Aorta (tissue), 5 donors: ENCODE measurements at regions of chr11 and their contacts with region 1.

Region 1: DNA sequence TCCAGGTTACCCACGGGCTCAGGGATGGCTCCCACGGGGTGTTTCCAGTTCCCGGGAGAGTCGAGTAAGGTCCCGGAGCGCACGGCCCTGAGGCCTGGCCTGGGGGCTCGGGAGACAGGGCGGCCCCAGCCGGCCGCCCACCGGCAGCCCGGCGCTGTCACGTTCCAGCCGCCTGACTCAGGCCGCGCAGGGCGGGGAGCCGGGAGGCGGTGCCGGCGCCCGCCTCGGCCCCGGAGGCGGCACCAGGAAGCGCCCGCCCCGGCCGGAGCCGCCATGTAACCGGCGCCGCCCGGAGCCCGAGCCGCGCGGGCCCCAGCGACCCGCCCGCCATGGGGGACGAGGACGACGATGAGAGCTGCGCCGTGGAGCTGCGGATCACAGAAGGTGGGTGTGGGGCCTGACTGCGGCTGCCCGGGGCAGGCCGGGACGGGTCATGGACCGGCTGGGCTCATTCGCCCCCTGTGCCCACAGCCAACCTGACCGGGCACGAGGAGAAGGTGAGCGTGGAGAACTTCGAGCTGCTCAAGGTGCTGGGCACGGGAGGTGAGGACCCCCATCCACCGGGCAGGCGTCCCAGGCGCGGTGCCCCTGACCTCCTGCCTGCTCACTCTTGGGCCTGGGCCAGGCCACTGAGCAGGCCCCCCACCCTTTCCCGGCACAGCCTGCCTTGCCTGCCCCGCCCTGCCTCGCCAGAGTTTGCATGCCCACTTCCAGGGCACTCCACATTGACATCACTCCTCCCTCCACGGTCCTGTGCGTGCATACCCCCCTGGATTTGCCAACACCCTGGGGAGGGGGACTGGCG is at the start of gene RPS6KA4:
- DNase-seq: peak; percentile 72 to 89
- ATAC-seq: peak; percentile 89
- H3K4me3 ChIP-seq: peak within 1 kb of the TSS; percentile 72 to 74
- H3K27ac ChIP-seq: peak within 1 kb of the TSS; percentile 1 to 87
- H3K4me1 ChIP-seq: no peaks in the 10 kb centered on the region
- H3K27me3 ChIP-seq: no peaks in the 10 kb centered on the region
- total RNA-seq, gene RPS6KA4: 25.8 to 31.8 TPM

Region 2: DNA sequence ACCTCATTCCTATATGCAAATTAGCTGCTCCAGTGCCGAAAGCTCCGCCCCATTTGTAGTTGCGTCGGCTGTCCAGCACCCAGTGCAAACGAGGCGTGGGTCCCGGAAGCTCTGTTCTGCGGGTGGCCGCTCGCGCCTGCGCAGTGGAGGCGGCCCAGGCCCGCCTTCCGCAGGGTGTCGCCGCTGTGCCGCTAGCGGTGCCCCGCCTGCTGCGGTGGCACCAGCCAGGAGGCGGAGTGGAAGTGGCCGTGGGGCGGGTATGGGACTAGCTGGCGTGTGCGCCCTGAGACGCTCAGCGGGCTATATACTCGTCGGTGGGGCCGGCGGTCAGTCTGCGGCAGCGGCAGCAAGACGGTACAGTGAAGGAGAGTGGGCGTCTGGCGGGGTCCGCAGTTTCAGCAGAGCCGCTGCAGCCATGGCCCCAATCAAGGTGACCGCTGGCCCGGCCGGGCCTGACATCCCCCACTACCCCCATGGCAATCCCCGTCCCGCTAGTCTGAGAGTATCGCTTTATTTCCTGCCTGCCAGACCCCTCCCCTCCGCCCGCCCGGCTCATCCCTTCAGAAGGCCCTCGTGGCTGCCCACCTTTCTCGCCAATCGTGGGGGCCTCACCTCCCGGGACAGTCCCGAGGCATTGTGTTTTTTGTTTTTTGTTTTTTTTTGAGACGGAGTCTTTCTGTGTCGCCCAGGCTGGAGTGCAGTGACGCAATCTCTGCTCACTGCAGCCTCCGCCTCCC is 41.0 kb before region 1 on chr11 and contains the start of gene PRDX5:
- intact Hi-C with region 1: loop called (anchors 1 to 5 kb)
- DNase-seq: peak; percentile 98
- ATAC-seq: peak; percentile 94
- H3K4me3 ChIP-seq: peak within 1 kb of the TSS; percentile 56 to 65
- H3K27ac ChIP-seq: peak within 1 kb of the TSS; percentile 32 to 85
- H3K4me1 ChIP-seq: no peaks in the 10 kb centered on the region
- H3K27me3 ChIP-seq: no peaks in the 10 kb centered on the region
- total RNA-seq, gene PRDX5: 69.9 to 95.7 TPM

Region 3: GRCh38 chr11:64409707-64410403 is 50.7 kb after region 1 on chr11:
- intact Hi-C with region 1: no loop called
- DNase-seq: no peak
- ATAC-seq: no peak
- H3K4me3 ChIP-seq: no peak overlapping the region
- H3K27ac ChIP-seq: no peak overlapping the region
- H3K4me1 ChIP-seq: no peaks in the 10 kb centered on the region
- H3K27me3 ChIP-seq: no peaks in the 10 kb centered on the region